ENCODE measurements at regions of chr19 and their contacts with region 1.

Region 1: DNA sequence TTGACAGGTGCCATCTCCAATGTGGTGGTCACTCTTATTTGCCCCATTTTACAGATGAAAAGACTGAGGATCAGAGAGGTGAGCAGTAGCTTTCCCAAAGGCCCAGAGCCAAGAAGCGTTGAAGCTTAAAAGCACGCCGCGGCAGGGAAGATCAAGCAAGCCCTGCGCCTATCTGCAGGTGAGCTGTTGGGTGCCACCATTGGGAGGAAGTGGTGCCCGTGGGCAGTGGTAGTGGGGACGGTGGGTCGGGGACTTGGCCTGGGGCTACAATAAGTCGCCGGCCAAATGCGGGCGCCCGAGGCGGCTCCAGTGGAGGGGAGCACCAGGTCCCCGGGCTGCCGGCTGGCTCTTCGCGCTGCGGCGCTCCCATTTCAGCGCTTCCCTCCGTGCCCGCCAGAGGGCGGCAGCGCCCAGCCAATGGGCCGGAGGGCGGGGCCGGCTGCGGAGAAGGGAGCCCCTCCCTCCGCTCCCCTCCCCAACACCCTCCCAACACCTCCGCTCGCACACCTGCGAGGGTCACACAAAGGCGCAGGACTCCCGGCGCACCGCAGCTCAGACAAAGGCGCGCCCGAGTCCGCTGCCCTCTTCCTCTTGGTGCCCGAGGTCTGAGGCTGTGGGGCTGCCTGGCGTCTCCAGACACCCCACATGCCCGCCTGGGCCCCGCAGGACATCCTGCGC is 744 bp upstream of the POU2F2 start:
- DNase-seq: peak; percentile 82
- ATAC-seq: peak; percentile 73
- H3K4me3 Mint-ChIP-seq: peak overlapping the region; percentile 70
- H3K27ac Mint-ChIP-seq: peak overlapping the region; percentile 77
- H3K4me1 Mint-ChIP-seq: peaks cover 46% of the 10 kb centered on the region
- H3K27me3 Mint-ChIP-seq: no peaks in the 10 kb centered on the region

Region 2: GRCh38 chr19:42113641-42114348 is 19.2 kb before region 1 on chr19:
- CTCF ChIA-PET with region 1: interaction called, 26 read pairs
- DNase-seq: no peak
- ATAC-seq: no peak
- H3K4me3 Mint-ChIP-seq: no peak overlapping the region
- H3K27ac Mint-ChIP-seq: no peak overlapping the region
- H3K4me1 Mint-ChIP-seq: peaks cover 22% of the 10 kb centered on the region
- H3K27me3 Mint-ChIP-seq: no peaks in the 10 kb centered on the region

Region 3: DNA sequence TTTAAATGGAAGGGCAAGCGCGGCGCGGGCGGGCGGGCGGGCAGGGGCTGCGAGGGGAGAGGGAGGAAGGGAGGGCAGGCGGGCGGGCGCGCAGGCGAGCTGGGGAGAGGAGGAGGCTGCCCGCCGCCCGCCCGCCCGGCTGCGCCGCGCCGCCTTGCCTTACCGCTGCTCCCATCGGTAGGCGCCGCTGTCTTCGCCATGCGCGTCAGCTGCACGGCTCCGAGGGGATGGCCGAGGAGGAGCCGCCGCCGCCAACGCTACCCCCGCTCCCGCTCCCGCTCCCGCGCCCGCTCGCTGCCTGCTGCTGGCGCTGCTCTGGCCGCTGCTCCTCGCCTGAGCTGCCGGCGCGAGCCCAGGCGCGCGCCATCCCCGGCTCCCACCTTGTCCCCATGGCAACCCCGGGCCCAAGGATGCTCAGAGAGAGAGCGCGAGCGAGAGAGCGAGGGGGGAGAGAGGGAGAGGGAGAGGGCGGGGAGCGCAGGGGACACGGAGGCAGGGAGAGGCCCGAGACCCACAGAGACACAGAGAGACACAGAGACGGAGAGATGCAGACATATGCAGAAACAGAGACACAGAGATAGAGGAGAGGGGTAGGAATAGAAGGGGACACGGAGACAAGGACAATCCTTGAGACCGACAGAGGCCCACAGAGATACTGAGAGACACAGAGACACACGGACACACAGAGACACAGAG is 44.1 kb after region 1 on chr19:
- CTCF ChIA-PET with region 1: interaction called, 79 read pairs
- DNase-seq: peak; percentile 80
- ATAC-seq: peak; percentile 94
- H3K4me3 Mint-ChIP-seq: no peak overlapping the region
- H3K27ac Mint-ChIP-seq: no peak overlapping the region
- H3K4me1 Mint-ChIP-seq: peaks cover 9% of the 10 kb centered on the region
- H3K27me3 Mint-ChIP-seq: peaks cover 31% of the 10 kb centered on the region

Region 4: DNA sequence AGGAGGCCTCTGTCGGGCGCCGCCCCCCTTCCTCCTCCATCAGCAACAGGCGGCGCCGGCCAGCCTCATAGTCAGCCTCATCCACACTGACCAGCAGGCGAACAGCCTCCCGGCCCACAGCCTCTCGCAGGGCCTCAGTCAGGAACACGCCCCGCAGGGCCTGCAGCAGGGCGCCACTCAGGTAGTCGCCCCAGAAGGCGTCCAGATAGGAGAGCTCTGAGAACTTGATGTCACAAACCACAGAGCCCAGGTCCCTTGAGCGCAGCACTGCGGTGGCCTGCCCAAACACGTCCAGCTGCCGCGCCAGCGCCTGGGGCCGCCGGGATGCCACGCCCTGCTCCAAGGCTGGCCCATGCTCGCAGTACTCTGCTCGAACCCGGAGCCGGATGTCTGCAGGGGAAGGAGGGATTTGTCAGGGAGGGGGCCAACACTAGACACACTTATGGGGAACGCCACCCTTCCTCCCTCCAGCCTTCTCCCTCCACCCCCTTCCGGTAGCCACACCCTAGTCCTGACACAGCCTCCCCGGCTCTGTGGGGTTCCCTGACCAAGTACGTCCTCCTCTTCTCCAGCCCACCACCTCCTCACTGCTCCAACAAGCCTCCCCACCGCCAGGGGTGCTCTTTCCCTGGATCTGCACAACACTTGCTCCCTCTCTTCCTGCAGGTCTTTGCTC is 66.6 kb after region 1 on chr19:
- CTCF ChIA-PET with region 1: interaction called, 17 read pairs
- DNase-seq: peak; percentile 94
- ATAC-seq: peak; percentile 70
- H3K4me3 Mint-ChIP-seq: peak overlapping the region; percentile 69
- H3K27ac Mint-ChIP-seq: peak overlapping the region; percentile 96
- H3K4me1 Mint-ChIP-seq: peaks cover 76% of the 10 kb centered on the region
- H3K27me3 Mint-ChIP-seq: no peaks in the 10 kb centered on the region

Region 5: GRCh38 chr19:42295831-42296525 is 163.0 kb after region 1 on chr19:
- CTCF ChIA-PET with region 1: interaction called, 15 read pairs
- DNase-seq: peak; percentile 92
- ATAC-seq: peak; percentile 85
- H3K4me3 Mint-ChIP-seq: no peak overlapping the region
- H3K27ac Mint-ChIP-seq: peak overlapping the region; percentile 40
- H3K4me1 Mint-ChIP-seq: peaks cover 2% of the 10 kb centered on the region
- H3K27me3 Mint-ChIP-seq: no peaks in the 10 kb centered on the region